ENCODE measurements at regions of chr17 and their contacts with region 1.

Region 1: DNA sequence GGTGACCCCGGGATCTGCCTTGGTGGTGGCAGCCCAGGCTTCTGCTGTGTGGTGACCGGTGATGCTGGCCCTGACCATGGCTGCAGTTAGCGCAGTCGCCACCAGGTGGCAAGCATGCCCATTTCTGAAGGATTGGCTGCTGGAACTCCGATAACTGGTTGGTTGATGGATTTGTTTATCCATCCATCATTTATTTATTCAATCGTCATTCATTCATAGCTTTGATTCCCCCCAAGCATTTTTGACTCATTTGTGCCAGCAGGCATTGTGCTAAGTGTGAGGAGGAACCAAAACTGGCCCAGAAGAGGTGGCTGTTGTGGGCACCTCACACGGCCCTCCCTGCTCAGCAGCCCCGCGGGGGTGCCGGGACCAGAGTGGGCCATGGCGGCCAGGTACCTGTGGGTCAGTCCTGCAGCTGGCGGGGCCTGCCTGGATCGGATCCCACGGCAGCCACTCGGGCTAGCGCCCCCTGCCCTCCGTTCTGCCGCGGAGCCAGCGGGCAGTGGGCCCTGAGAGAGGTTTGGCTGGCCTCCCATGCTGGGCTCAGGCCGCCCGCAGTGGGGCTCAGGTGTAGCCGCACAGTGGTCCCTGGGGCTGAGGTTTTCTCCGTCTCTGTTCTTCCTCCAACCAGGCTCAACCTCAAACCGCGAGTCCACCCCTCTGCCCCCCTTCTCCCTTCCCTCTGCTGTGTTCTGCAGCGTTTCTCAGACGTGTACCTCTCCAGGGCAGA is 28.8 kb upstream of the ITGA3 start:
- DNase-seq: peak; percentile 81
- H3K4me3 ChIP-seq: peak overlapping the region in 1 of 2 donors; percentile 5
- H3K27ac ChIP-seq: no peak overlapping the region
- H3K4me1 ChIP-seq: peaks cover 7% of the 10 kb centered on the region
- H3K27me3 ChIP-seq: no peaks in the 10 kb centered on the region
- CTCF ChIP-seq: peak; percentile 95 to 99 (median 98)
- POLR2A ChIP-seq: no peak

Region 2: DNA sequence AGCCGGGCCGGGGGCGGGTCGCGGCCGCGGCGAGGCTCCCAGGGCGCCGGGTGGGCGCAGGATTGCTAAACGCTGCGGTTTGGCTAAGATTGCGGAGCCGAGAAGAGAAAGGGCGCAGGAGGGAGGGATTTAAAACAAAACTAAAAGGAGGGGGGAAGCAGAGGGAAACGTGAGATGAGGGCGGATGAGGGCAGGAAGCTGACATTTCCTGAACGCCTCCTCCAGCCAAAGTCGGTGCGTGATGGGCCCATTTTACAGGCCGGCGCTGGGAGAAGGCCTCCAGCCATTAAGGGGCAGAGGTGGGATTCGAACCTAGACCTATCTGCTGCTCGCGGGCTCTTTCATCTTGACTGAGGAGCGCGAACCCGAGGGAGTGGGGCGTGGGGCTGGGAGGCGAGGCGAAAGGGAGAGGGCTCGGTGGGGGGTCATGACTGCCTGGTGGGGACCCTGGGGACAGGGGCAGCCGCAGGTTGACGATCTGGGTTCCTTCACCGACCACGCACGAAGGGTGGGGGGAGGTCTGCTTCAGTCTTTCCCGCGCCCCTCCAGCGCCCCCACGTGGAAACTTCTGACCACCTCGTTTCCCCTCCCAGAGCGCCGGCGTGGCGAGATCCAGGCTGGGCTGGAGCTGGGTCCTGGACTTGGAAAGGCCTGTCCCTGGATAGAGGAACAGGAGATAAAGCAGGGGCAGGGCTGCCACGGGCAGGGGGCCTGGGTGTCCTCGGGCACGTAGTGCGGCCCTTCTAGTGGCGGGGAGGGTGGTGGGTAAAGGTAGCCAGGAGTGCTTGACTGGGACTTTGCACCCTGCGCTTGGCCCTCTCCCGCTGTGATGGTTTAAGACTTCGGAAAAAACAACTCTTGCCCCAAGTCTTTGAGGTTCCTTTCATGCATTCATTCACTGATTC is 175.4 kb before region 1 on chr17:
- intact Hi-C with region 1: no loop called
- DNase-seq: peak; percentile 69
- H3K4me3 ChIP-seq: peak overlapping the region; percentile 56 to 62
- H3K27ac ChIP-seq: peak overlapping the region in 1 of 2 donors; percentile 38
- H3K4me1 ChIP-seq: no peaks in the 10 kb centered on the region
- H3K27me3 ChIP-seq: no peaks in the 10 kb centered on the region
- CTCF ChIP-seq: peak; percentile 29 to 77 (median 70)
- POLR2A ChIP-seq: no peak

Region 3: DNA sequence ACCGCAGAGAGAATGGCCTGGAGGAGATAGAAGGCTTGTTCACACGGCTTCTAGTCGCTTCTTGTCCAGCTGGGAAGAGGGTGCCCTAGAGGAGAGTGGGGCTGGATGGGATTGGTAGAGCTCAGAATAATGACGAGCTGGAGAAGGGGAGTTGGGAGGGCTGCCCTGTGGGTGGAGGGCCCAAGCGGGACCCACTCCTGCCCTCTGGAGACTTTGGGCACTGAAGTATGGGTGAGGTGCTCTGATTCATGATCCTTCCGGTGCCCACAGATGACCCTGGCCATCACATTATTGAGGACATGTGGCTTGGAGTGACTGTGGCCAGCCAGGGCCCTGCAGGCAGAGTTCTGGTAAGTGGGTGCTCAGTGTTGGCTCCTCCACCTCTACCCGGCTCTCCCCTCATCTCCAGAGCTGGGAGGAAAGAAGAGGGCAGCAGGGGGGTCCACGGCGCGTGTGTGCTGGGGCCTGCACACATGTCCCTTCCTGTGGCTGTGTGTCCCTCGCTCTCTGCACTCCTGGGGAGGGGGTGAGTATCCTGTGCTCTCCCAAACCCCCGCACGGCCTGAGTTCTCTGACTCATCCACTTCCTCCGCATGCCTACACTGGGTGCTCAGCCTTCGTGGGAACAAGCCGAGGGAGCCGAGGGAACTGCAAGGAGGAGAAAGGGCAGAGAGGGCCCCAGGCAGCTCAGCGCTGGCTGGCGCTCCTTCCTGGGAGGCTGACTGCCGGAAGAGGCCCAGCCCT is 37.4 kb after region 1 on chr17:
- intact Hi-C with region 1: loop called (anchors 5 kb)
- DNase-seq: peak; percentile 51
- H3K4me3 ChIP-seq: no peak overlapping the region
- H3K27ac ChIP-seq: peak overlapping the region; percentile 71 to 77
- H3K4me1 ChIP-seq: no peaks in the 10 kb centered on the region
- H3K27me3 ChIP-seq: no peaks in the 10 kb centered on the region
- CTCF ChIP-seq: peak in 1 of 4 experiments; percentile 4
- POLR2A ChIP-seq: no peak

Region 4: GRCh38 chr17:50087246-50087911 is 60.3 kb after region 1 on chr17:
- intact Hi-C with region 1: loop called (anchors 1 kb)
- DNase-seq: peak; percentile 53
- H3K4me3 ChIP-seq: no peak overlapping the region
- H3K27ac ChIP-seq: no peak overlapping the region
- H3K4me1 ChIP-seq: no peaks in the 10 kb centered on the region
- H3K27me3 ChIP-seq: no peaks in the 10 kb centered on the region
- CTCF ChIP-seq: peak; percentile 88 to 94 (median 94)
- POLR2A ChIP-seq: no peak